ENCODE measurements at regions of chr16 and their contacts with region 1.

Region 1: DNA sequence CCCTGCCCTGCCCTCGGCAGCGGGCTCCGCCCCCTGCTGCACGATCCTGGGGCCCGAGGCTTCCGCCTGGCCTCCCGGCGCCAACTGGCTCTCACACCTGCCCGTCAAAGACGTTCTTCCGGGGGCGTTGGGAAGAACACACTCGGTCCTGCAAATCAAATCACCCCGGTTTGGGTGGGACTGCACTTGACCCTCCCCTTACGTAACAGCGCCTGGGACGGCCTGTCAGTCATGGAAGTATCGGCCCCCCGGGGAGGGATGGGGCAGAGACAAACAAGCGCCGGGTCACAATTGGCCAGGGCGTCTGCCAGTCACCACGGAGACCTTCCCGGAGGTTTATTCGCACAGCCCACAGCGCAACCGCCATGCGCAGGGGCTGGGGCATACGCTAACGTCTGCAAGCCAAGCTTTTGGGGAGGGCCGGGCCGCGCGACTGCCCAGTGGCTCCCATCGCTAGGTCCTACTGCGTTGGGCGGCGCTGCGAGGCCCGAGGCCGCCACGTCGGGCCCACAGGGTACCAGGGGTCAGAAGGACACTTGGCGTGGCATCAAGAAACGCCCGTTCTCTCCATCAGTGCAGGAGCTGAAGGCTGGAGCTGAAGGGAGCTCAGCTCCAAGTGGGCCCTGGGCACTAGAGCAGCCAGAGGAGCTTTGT is 388 bp upstream of the AKTIP start:
- DNase-seq: peak; percentile 99
- H3K4me3 ChIP-seq: peak overlapping the region; percentile 88
- H3K27ac ChIP-seq: peak overlapping the region; percentile 74
- H3K4me1 ChIP-seq: peaks cover 27% of the 10 kb centered on the region
- H3K27me3 ChIP-seq: no peaks in the 10 kb centered on the region
- CTCF ChIP-seq: no peak

Region 2: GRCh38 chr16:53323924-53324323 is 179.5 kb before region 1 on chr16:
- CTCF ChIA-PET with region 1: no interaction called
- POLR2A ChIA-PET with region 1: no interaction called
- intact Hi-C with region 1: loop called (anchors 10 kb)
- DNase-seq: no peak
- H3K4me3 ChIP-seq: no peak overlapping the region
- H3K27ac ChIP-seq: no peak overlapping the region
- H3K4me1 ChIP-seq: no peaks in the 10 kb centered on the region
- H3K27me3 ChIP-seq: no peaks in the 10 kb centered on the region
- CTCF ChIP-seq: no peak

Region 3: DNA sequence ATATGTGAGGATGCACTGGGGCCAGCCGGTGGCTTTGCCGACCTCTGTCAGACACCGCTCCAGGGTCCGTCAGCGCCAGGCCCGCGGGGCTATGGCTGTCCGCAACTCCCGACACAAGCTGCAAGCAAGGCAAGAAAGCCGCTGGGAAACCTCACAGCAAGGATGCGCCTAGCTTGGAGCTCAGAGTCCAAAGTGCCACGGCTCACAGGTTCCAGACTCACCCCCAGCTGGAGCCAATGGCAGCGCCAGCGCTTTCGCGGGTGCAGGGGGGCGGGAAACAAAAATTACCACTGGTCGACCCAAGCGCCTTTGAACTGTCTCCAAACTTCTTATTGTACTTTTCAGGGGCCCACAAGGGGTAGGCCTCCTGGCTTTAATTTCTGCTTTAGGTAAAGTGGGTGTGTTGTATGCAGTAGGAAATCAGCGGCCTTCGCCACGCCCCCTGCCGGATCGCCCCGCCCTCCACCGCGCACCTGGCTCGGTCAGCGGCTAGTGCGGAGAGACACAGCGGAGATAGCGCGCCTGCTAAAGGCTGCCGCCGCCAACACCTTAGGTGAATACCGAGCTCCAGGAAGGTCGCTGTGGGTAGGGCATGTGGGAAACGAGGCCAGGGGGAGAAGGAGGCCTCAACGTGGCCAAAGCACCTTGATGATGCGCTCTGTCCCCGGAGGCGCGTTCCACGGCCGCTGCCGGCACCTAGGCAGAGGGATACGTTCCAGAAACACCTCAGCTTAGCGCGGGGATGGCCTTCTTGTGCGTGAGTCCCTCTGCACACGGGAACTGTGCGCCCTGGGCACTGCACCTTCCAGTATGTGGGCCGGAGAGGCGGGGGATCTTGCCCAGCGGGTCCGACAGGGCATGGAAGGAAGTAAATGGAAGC is 130.2 kb before region 1 on chr16:
- CTCF ChIA-PET with region 1: no interaction called
- POLR2A ChIA-PET with region 1: interaction called, 9 read pairs
- intact Hi-C with region 1: loop called (anchors 5 kb)
- DNase-seq: peak; percentile 67 to 88
- H3K4me3 ChIP-seq: peak overlapping the region; percentile 69
- H3K27ac ChIP-seq: peak overlapping the region; percentile 29; the same call in 1 of the 2 replicates
- H3K4me1 ChIP-seq: peaks cover 24% of the 10 kb centered on the region
- H3K27me3 ChIP-seq: 0 out of 2 replicates have a peak, but pooled peaks cover 8% of the 10 kb centered on the region
- CTCF ChIP-seq: no peak

Region 4: DNA sequence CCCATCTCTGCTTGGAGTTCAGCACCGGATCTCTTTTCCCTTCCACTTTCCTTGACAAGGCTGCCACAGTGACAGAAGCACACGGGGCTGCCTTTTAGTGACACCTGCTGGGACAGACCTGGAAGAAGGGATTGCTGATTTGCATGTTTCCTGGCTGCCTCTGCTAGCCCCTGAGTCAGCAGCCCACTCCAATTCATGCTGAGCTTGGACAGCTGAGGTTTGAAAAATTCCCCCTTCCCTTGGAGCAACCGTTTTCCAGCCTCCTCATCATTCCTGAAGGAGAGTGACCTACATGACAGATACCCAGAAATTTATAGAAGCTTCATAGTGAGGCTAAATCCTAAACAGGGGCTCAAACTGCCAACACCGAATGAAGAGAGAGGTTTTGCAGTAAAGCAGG is 87.9 kb before region 1 on chr16:
- CTCF ChIA-PET with region 1: no interaction called
- POLR2A ChIA-PET with region 1: interaction called, 5 read pairs
- intact Hi-C with region 1: loop called (anchors 5 kb)
- DNase-seq: peak in 1 of 2 experiments; percentile 35
- H3K4me3 ChIP-seq: no peak overlapping the region
- H3K27ac ChIP-seq: no peak overlapping the region
- H3K4me1 ChIP-seq: peaks cover 25% of the 10 kb centered on the region
- H3K27me3 ChIP-seq: no peaks in the 10 kb centered on the region
- CTCF ChIP-seq: no peak; the same call in 1 of the 2 replicates

Region 5: GRCh38 chr16:53435066-53435688 is 68.2 kb before region 1 on chr16:
- CTCF ChIA-PET with region 1: no interaction called
- POLR2A ChIA-PET with region 1: no interaction called
- intact Hi-C with region 1: loop called (anchors 2 kb)
- DNase-seq: peak; percentile 61 to 92
- H3K4me3 ChIP-seq: peak overlapping the region; percentile 96
- H3K27ac ChIP-seq: peak overlapping the region; percentile 48
- H3K4me1 ChIP-seq: peaks cover 28% of the 10 kb centered on the region
- H3K27me3 ChIP-seq: no peaks in the 10 kb centered on the region
- CTCF ChIP-seq: no peak

Region 6: GRCh38 chr16:53583401-53583800 is 80.0 kb after region 1 on chr16:
- CTCF ChIA-PET with region 1: no interaction called
- POLR2A ChIA-PET with region 1: no interaction called
- intact Hi-C with region 1: no loop called
- DNase-seq: no peak
- H3K4me3 ChIP-seq: no peak overlapping the region
- H3K27ac ChIP-seq: no peak overlapping the region
- H3K4me1 ChIP-seq: no peaks in the 10 kb centered on the region
- H3K27me3 ChIP-seq: no peaks in the 10 kb centered on the region
- CTCF ChIP-seq: no peak

Region 7: GRCh38 chr16:53913099-53913870 is 409.9 kb after region 1 on chr16:
- CTCF ChIA-PET with region 1: no interaction called
- POLR2A ChIA-PET with region 1: no interaction called
- intact Hi-C with region 1: no loop called
- DNase-seq: no peak
- H3K4me3 ChIP-seq: no peak overlapping the region
- H3K27ac ChIP-seq: no peak overlapping the region
- H3K4me1 ChIP-seq: no peaks in the 10 kb centered on the region; the same call in 1 of the 2 replicates
- H3K27me3 ChIP-seq: no peaks in the 10 kb centered on the region
- CTCF ChIP-seq: no peak

Region 8: DNA sequence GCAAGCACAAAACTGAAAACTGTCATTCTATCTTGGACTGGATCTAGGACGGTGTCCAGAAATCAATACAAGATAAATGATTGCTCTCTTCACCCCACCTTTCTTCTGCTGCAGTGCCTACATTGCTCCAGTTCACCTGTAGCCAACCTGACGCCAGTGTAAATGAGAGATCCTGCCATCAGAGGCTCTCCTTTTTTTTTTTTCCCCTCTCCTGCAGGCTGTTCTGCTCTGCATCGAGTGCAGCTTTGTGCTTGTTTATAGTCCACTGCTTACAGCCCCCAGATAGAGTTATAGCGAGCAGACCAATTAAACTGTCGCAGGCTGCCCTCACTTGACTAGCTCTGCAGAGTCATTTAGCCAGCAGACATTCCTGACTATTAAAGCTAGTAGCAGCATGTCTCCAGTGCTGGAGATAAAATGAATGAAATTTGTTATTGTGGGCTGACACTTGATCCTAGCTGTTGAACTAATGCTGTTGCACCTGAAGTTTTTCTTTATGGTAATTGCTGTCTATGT is 457.6 kb after region 1 on chr16:
- CTCF ChIA-PET with region 1: no interaction called
- POLR2A ChIA-PET with region 1: no interaction called
- intact Hi-C with region 1: no loop called
- DNase-seq: no peak
- H3K4me3 ChIP-seq: no peak overlapping the region
- H3K27ac ChIP-seq: no peak overlapping the region
- H3K4me1 ChIP-seq: no peaks in the 10 kb centered on the region
- H3K27me3 ChIP-seq: no peaks in the 10 kb centered on the region
- CTCF ChIP-seq: no peak

Measured in PC-9 (cell line).